Right ventricle myocardium superior (tissue), 1 donor: ENCODE measurements at regions of chr14 and their contacts with region 1.

Region 1: GRCh38 chr14:64986578-64987571 is at the start of gene FNTB:
- DNase-seq: peak; percentile 98
- ATAC-seq: peak; percentile 99
- total RNA-seq, gene FNTB: 15.8 TPM

Region 2: GRCh38 chr14:64823305-64823861 is 163.5 kb before region 1 on chr14:
- intact Hi-C with region 1: loop called (anchors 10 kb)
- DNase-seq: peak; percentile 88
- ATAC-seq: peak; percentile 92

Region 3: DNA sequence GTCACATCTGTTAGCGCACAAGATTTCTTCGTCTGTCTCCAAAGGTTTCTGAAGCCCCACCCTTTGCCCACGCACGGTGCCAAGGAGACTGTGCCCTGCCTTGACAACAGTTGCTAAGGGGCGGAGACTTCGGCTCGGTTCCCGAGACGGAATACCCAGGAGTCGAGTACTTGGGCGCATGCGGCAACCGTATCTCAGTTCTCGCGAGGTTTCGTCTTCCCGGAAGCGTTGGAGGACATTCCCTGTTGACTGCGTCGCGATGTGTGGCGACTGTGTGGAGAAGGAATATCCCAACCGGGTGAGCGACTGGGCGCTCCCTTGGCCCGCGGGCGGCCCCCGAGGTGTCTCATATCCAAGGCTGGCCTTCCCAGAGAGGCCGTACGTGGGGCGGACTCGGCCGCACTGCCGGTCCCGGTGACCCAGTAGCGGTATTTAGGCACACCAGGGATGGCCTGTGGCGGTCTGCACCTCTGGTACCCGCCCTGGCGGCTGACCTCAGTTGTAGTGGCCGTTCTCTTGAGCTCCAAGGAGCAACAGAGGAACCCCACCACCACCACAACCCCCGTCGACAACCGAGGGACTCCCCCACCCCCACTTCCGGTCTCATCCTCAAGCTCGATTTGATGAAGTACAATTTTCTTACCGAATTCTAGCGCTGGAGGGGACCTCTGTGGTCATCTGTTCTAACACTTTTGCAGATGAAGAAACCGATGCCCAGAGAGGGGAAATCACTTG is 72.5 kb before region 1 on chr14 and contains the start of gene CHURC1:
- intact Hi-C with region 1: loop called (anchors 10 kb)
- DNase-seq: peak; percentile 99
- ATAC-seq: peak; percentile 99
- total RNA-seq, gene CHURC1: 107 TPM